AG04449 (cell line): ENCODE measurements at regions of chr3 and their contacts with region 1.

Region 1: GRCh38 chr3:186540221-186540834 is 3.9 kb downstream of the CRYGS start:
- DNase-seq: peak; percentile 21
- H3K4me3 ChIP-seq: no peak overlapping the region
- CTCF ChIP-seq: peak; percentile 32

Region 2: GRCh38 chr3:185942907-185943759 is 597.2 kb before region 1 on chr3:
- CTCF ChIA-PET with region 1: interaction called, 29 read pairs
- POLR2A ChIA-PET with region 1: no interaction called
- DNase-seq: peak; percentile 23
- H3K4me3 ChIP-seq: no peak overlapping the region
- CTCF ChIP-seq: peak; percentile 96

Region 3: GRCh38 chr3:185976977-185977678 is 563.2 kb before region 1 on chr3:
- CTCF ChIA-PET with region 1: interaction called, 211 read pairs
- POLR2A ChIA-PET with region 1: no interaction called
- DNase-seq: no peak
- H3K4me3 ChIP-seq: no peak overlapping the region
- CTCF ChIP-seq: peak; percentile 96

Region 4: DNA sequence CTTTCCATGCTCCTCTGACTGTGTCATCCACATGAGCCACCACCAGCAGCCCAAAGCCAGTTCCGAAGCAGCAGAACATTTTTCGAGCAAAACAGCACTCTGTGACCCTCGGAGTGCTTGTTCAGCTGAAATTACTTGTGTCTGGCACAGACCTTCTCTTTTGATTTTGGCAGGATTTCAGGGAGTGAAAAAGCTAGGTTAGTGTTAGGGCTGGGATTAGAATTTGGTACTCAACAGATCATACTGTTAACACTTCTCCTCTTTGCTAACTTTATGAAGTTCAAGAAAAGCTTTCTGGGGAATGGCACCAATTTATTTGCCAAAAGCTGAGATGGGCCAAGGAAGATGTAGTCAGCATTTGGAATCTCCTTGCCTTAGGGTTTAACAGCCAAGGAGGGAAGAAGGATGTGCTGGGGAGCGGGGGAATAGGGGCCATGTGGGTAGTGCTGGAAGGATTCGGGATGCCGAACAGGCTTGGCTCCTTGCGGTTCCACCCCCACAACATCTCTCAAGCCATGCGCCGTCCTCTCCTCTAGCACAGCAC is 547.4 kb before region 1 on chr3:
- CTCF ChIA-PET with region 1: interaction called, 16 read pairs
- POLR2A ChIA-PET with region 1: no interaction called
- DNase-seq: no peak
- H3K4me3 ChIP-seq: no peak overlapping the region
- CTCF ChIP-seq: no peak

Region 5: DNA sequence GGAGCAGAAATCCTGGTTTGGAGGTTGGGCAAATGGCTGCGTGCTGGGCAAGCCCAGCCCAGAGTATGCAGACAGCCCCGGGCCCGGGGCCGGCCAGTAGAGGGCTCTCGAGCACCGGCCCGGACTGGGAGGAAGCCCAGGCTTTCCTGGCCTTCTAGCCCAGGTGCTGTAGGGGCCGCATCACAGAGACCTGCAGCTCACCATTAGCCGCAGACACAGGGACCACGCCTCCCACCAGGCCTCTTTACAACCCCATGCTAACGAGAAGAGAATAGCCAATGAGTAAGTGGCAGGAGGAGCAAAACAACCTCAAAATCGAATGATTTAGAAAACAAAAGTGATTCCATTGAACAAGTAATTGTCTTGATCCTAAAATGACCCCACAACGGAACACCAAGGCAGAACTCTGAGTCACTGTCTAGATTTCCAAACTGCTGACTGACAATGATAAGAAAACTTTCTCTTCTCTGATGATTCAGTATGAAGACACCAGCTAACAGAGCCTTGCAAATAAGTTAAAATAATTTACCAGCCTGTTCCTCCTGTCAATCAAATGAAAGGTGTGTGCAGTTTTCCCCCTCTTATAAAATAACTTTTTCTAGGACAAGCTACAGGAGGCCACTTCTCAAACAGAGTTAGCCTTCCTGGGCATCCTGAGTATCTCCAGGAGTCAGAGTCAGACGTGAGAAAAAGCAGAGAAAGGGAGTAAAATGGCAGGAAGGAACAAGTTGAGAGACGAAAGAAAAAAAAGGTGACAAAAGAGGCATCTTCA is 280.5 kb before region 1 on chr3:
- CTCF ChIA-PET with region 1: interaction called, 199 read pairs
- POLR2A ChIA-PET with region 1: no interaction called
- DNase-seq: peak; percentile 36
- H3K4me3 ChIP-seq: no peak overlapping the region
- CTCF ChIP-seq: peak; percentile 86

Region 6: DNA sequence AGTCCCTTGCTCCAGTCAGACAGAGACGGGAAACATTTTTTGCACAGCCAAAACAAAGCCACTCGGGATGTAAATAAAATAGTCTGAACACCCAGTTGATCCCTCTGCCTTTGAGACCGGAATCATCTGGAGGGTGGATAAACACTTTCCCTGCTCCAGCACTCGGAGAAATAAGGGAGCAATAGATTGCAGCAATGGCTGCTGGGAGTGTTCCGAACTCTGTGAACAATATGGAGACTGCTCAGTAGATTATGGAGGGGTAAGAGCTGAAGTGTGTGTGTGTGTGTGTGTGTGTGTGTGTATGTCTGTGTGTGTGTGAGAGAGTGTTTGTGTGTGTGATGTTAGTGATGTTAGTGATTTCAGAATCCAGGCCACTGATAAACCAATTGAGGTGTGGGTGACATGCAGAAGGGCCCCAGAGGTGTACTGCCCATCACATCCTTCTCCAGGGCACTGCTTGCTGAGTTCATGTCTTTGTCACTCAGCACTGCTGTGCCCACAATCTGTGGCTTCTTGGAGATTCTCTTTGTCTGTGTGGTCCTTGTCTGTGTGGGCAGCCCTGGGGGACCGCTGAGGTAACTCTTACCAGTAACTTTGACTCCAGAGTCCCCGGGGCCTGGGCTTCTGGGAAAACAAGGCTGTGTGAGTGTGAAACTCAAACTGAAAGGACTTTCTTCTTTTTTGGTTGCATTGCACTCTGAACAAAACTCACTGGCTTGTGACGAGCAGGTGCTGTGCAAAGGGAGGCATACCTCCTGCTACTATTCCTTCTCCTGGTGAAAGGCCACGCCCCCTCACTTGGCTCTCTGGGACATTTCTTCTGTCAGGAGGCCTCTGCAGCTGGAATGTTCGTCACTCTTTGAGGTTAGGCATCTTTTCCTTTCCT is 19.1 kb before region 1 on chr3:
- CTCF ChIA-PET with region 1: interaction called, 11 read pairs
- POLR2A ChIA-PET with region 1: no interaction called
- DNase-seq: no peak
- H3K4me3 ChIP-seq: no peak overlapping the region
- CTCF ChIP-seq: no peak

Region 7: GRCh38 chr3:186551387-186551786 is 11.1 kb after region 1 on chr3:
- CTCF ChIA-PET with region 1: interaction called, 33 read pairs
- POLR2A ChIA-PET with region 1: no interaction called
- DNase-seq: no peak
- H3K4me3 ChIP-seq: no peak overlapping the region
- CTCF ChIP-seq: no peak

Region 8: GRCh38 chr3:188468662-188469061 is 1928.3 kb after region 1 on chr3:
- CTCF ChIA-PET with region 1: no interaction called
- POLR2A ChIA-PET with region 1: no interaction called
- DNase-seq: no peak
- H3K4me3 ChIP-seq: no peak overlapping the region
- CTCF ChIP-seq: no peak